Psoas muscle (tissue), 8 donors: ENCODE measurements at regions of chr15 and their contacts with region 1.

Region 1: GRCh38 chr15:78149068-78149804 is at the start of gene IDH3A:
- DNase-seq: peak; percentile 100
- ATAC-seq: peak; percentile 90 to 97 (median 92)
- H3K4me3 ChIP-seq: peak within 1 kb of the TSS; percentile 94
- H3K27ac ChIP-seq: peak within 1 kb of the TSS; percentile 92
- H3K4me1 ChIP-seq: peaks cover 59% of the 10 kb centered on the region
- H3K27me3 ChIP-seq: no peaks in the 10 kb centered on the region
- CTCF ChIP-seq: no peak
- total RNA-seq, gene IDH3A: 203 to 309 (median 251) TPM

Region 2: GRCh38 chr15:78212546-78213424 is 63.5 kb after region 1 on chr15:
- intact Hi-C with region 1: no loop called
- DNase-seq: peak; percentile 82 to 92
- ATAC-seq: peak; percentile 82 to 89 (median 87)
- H3K4me3 ChIP-seq: peak overlapping the region; percentile 23
- H3K27ac ChIP-seq: peak overlapping the region; percentile 73
- H3K4me1 ChIP-seq: peaks cover 53% of the 10 kb centered on the region
- H3K27me3 ChIP-seq: no peaks in the 10 kb centered on the region
- CTCF ChIP-seq: no peak

Region 3: GRCh38 chr15:78880242-78880533 is 731.0 kb after region 1 on chr15:
- intact Hi-C with region 1: loop called in 1 of 2 experiments (anchors 10 kb)
- DNase-seq: no peak
- ATAC-seq: peak; percentile 19 to 45 (median 40)
- H3K4me3 ChIP-seq: no peak overlapping the region
- H3K27ac ChIP-seq: peak overlapping the region; percentile 42
- H3K4me1 ChIP-seq: peaks cover 69% of the 10 kb centered on the region
- H3K27me3 ChIP-seq: no peaks in the 10 kb centered on the region
- CTCF ChIP-seq: no peak